ENCODE measurements at regions of chr16 and their contacts with region 1.

Region 1: DNA sequence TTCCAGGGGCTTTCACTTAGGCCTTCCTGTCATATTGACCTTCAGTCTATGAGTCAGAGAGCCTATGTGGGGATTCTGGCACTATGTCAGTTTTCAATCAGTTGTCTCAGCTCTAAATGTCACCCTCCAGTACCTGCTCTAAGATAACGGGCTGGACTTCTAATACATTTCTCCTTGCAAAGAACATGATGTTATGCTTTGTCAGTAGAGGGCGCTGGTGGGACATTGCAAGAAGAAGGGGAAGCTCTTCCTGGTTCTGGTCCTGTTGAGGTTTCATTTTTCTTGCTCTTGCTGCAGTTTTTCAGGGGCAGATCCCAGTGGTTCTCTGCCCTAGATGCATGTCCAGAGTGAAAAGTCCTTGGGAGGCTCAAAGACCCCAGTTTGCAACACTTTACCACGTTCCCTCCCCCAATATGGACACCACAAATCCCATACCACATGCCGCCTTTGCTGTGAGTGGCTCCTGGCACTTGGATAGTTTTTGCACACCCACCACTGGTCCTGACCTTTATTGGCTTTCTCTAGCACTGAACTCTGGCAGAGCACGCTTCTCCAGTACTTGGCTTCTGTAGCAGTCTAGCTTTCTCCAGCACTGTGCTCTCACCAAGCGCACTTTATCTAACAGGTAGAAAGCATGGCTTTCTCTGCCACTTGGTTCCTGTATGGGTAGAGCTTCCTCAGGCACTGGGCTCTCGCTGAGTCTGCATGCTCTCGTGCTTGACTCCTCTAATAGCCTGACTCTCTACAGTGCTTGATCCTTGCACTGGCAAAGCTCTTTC is 49.0 kb downstream of the BCL7C start:
- DNase-seq: peak; percentile 89
- CTCF ChIP-seq: peak; percentile 84

Region 2: GRCh38 chr16:30893744-30894539 is 49.1 kb after region 1 on chr16 and contains the start of gene BCL7C:
- in situ Hi-C with region 1: loop called (anchors 10 kb)
- DNase-seq: peak; percentile 93
- CTCF ChIP-seq: peak; percentile 66

Region 3: DNA sequence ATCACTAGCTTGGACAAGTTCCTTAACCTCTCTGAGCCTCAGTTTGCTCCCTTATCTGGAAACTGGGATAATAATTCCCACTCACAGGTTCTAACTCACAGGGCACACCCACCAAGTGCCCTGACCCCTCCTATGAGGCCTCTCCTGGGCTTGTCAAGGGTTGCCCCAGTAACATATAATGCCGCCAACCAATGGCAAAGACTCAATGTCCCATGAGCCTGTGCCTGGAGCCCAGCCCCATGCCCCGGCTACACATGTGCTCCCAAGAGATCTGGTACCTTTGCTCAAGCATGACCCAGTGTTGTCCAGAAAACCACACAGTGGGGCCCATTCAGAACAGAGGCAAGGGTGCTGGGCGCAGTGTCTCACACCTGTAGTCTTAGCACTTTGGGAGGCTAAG is 70.0 kb after region 1 on chr16:
- in situ Hi-C with region 1: loop called (anchors 5 kb)
- DNase-seq: no peak
- CTCF ChIP-seq: no peak